Activated naive CD4-positive, alpha-beta T cell treated with anti-CD3 and anti-CD28 coated beads for 36 hours (primary cell): ENCODE measurements at regions of chr9 and their contacts with region 1.

Region 1: GRCh38 chr9:24245988-24246387 is 299.7 kb downstream of the IZUMO3 start:
- DNase-seq: peak; percentile 2
- H3K4me3 Mint-ChIP-seq: no peak overlapping the region
- H3K27ac Mint-ChIP-seq: no peak overlapping the region
- H3K4me1 Mint-ChIP-seq: no peaks in the 10 kb centered on the region
- H3K27me3 Mint-ChIP-seq: no peaks in the 10 kb centered on the region

Region 2: DNA sequence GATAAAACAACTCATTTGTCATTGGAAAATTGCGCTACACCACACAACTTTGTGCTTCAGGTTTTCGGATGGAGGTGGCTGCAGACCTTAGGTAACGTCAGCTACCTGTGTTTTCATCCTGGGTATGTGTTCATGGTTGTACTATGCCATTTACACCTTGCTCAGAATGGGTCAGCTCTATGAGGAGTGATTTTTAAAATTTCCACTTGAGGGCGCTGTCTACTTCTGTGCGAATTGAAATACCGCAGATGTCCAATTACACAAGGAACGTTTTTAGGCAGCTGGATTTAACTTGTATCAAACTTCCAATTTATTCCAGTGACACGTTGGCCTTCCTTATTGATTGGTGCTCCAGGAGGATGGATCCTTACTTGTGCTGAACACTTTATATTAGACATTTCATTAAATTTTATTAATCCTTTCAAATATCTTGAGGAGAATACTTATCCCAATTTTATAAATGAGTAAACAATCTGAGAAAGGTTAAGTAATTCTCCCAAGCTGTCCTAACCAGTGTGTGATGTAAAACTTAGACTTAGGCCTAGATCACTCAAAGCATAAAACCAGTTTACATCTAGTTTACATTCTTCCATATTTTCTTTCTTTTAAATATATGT is 1776.0 kb before region 1 on chr9:
- CTCF ChIA-PET with region 1: no interaction called
- intact Hi-C with region 1: loop called (anchors 2 kb)
- DNase-seq: peak; percentile 24
- H3K4me3 Mint-ChIP-seq: no peak overlapping the region
- H3K27ac Mint-ChIP-seq: no peak overlapping the region
- H3K4me1 Mint-ChIP-seq: no peaks in the 10 kb centered on the region
- H3K27me3 Mint-ChIP-seq: no peaks in the 10 kb centered on the region

Region 3: DNA sequence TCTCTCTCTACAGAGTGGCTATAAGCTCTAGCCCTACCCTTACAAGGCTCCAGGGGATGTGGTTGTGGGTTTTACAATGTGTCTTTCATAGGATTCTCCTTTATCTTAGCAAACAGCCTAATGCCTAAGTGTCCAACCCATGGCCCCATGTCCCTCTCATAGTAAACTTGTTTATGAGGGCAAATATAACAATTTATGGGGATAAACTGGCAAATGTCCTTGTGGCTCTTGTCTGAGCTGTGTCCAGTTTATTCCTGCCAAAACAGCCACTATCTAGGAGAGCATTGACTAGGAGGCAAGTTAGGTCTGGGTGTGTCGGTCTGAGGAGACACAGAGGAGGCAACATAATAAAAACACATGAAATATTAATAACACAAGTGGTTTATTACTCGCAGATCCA is 35.3 kb before region 1 on chr9:
- CTCF ChIA-PET with region 1: no interaction called
- intact Hi-C with region 1: no loop called
- DNase-seq: no peak
- H3K4me3 Mint-ChIP-seq: no peak overlapping the region
- H3K27ac Mint-ChIP-seq: no peak overlapping the region
- H3K4me1 Mint-ChIP-seq: no peaks in the 10 kb centered on the region
- H3K27me3 Mint-ChIP-seq: no peaks in the 10 kb centered on the region

Region 4: DNA sequence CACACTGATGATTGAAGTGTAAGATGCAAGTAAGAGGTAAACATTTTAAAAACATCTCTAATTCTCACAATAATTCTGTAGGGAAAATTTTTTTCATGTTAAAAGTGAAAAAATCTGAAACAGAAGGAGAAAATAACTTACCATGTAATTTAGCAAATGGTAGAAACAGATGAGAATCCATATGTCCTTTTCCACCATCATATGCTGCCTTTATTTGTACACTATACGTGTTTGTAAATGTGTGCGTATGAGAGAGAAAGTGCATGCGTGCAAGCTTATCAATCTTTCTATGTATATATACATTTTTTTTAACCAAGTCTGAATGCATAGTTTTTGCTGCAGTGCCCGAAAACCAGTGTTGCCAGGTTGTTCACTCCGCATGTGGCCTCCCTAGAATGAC is 113.1 kb after region 1 on chr9:
- CTCF ChIA-PET with region 1: no interaction called
- intact Hi-C with region 1: no loop called
- DNase-seq: no peak
- H3K4me3 Mint-ChIP-seq: no peak overlapping the region
- H3K27ac Mint-ChIP-seq: no peak overlapping the region
- H3K4me1 Mint-ChIP-seq: no peaks in the 10 kb centered on the region
- H3K27me3 Mint-ChIP-seq: no peaks in the 10 kb centered on the region